ENCODE measurements at regions of chr21 and their contacts with region 1.

Region 1: GRCh38 chr21:42145569-42146272 is 73.2 kb upstream of the ABCG1 start:
- DNase-seq: peak; percentile 36
- ATAC-seq: peak; percentile 86
- H3K4me3 Mint-ChIP-seq: no peak overlapping the region
- H3K27ac Mint-ChIP-seq: no peak overlapping the region
- H3K4me1 Mint-ChIP-seq: peaks cover 7% of the 10 kb centered on the region
- H3K27me3 Mint-ChIP-seq: no peaks in the 10 kb centered on the region
- CTCF ChIP-seq: no peak

Region 2: GRCh38 chr21:42309753-42310221 is 164.1 kb after region 1 on chr21:
- CTCF ChIA-PET with region 1: interaction called, 7 read pairs
- POLR2A ChIA-PET with region 1: no interaction called
- intact Hi-C with region 1: loop called (anchors 1 kb)
- DNase-seq: peak; percentile 43
- ATAC-seq: peak; percentile 71
- H3K4me3 Mint-ChIP-seq: no peak overlapping the region
- H3K27ac Mint-ChIP-seq: no peak overlapping the region
- H3K4me1 Mint-ChIP-seq: peaks cover 6% of the 10 kb centered on the region
- H3K27me3 Mint-ChIP-seq: peaks cover 18% of the 10 kb centered on the region
- CTCF ChIP-seq: no peak

Region 3: GRCh38 chr21:42337830-42338728 is 192.4 kb after region 1 on chr21:
- CTCF ChIA-PET with region 1: interaction called, 3 read pairs
- POLR2A ChIA-PET with region 1: no interaction called
- intact Hi-C with region 1: loop called (anchors 1 kb)
- DNase-seq: peak; percentile 61
- ATAC-seq: peak; percentile 100
- H3K4me3 Mint-ChIP-seq: no peak overlapping the region
- H3K27ac Mint-ChIP-seq: no peak overlapping the region
- H3K4me1 Mint-ChIP-seq: peaks cover 10% of the 10 kb centered on the region
- H3K27me3 Mint-ChIP-seq: peaks cover 13% of the 10 kb centered on the region
- CTCF ChIP-seq: no peak